Esophagus muscularis mucosa (tissue), 4 donors: ENCODE measurements at regions of chr14 and their contacts with region 1.

Region 1: GRCh38 chr14:51651388-51652167 is at the start of gene FRMD6:
- DNase-seq: peak; percentile 96
- H3K4me3 ChIP-seq: peak within 1 kb of the TSS; percentile 81 to 98 (median 88)
- H3K27ac ChIP-seq: peak within 1 kb of the TSS; percentile 91 to 97 (median 96)
- H3K4me1 ChIP-seq: peaks cover 18 to 52% (median 51%) of the 10 kb centered on the region in 4 donors
- H3K27me3 ChIP-seq: no peaks in the 10 kb centered on the region
- CTCF ChIP-seq: peak; percentile 73 to 84 (median 74)
- EP300 ChIP-seq: no peak
- POLR2A ChIP-seq: peak; percentile 52
- total RNA-seq, gene FRMD6: 35.7 to 44.9 (median 37.5) TPM

Region 2: GRCh38 chr14:51283402-51284085 is 368.0 kb before region 1 on chr14:
- intact Hi-C with region 1: loop called (anchors 2 kb)
- DNase-seq: no peak
- H3K4me3 ChIP-seq: no peak overlapping the region
- H3K27ac ChIP-seq: no peak overlapping the region
- H3K4me1 ChIP-seq: peaks cover 0 to 9% (median 0%) of the 10 kb centered on the region in 4 donors
- H3K27me3 ChIP-seq: no peaks in the 10 kb centered on the region
- CTCF ChIP-seq: peak; percentile 77 to 91 (median 91)
- EP300 ChIP-seq: no peak
- POLR2A ChIP-seq: no peak

Region 3: GRCh38 chr14:51547260-51547659 is 104.3 kb before region 1 on chr14:
- intact Hi-C with region 1: loop called (anchors 5 kb)
- DNase-seq: no peak
- H3K4me3 ChIP-seq: no peak overlapping the region
- H3K27ac ChIP-seq: peak overlapping the region; percentile 76 to 80 (median 80)
- H3K4me1 ChIP-seq: peaks cover 12 to 44% (median 39%) of the 10 kb centered on the region in 4 donors
- H3K27me3 ChIP-seq: no peaks in the 10 kb centered on the region
- CTCF ChIP-seq: no peak
- EP300 ChIP-seq: peak; percentile 50
- POLR2A ChIP-seq: no peak

Region 4: GRCh38 chr14:51780006-51780692 is 128.6 kb after region 1 on chr14:
- intact Hi-C with region 1: loop called (anchors 2 kb)
- DNase-seq: peak; percentile 94
- H3K4me3 ChIP-seq: peak overlapping the region in 3 of 4 donors; percentile 8 to 33 (median 17)
- H3K27ac ChIP-seq: no peak overlapping the region
- H3K4me1 ChIP-seq: peaks cover 6 to 14% (median 11%) of the 10 kb centered on the region in 4 donors
- H3K27me3 ChIP-seq: no peaks in the 10 kb centered on the region
- CTCF ChIP-seq: peak; percentile 85 to 90 (median 87)
- EP300 ChIP-seq: no peak
- POLR2A ChIP-seq: no peak